ENCODE measurements at regions of chr18 and their contacts with region 1.

Region 1: DNA sequence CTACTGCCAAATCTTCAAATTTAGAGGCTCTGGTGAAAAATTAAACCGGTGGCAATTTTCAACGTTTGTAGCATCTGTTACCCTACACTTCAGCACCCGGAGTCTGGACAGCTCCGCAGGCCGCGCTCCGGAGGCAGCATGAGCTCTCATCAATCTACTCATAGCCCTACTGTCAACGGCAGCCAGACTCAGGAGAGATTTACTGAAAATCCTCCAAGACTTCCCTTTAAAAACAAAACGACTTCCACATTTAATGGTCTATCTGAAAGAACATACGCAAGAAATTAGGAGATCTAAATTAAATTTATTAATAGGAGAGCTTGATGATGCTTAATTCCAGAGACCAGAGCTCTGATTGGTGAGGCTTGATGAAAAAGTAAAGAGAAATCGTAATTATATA is 970 bp upstream of the ADCYAP1 start:
- DNase-seq: peak; percentile 57
- ATAC-seq: no peak
- H3K4me3 ChIP-seq: no peak overlapping the region
- H3K27ac ChIP-seq: no peak overlapping the region
- H3K4me1 ChIP-seq: 0 out of 2 replicates have a peak, but pooled peaks cover 4% of the 10 kb centered on the region
- H3K27me3 ChIP-seq: peaks cover 97% of the 10 kb centered on the region
- CTCF ChIP-seq: no peak

Region 2: GRCh38 chr18:731185-731584 is 172.5 kb before region 1 on chr18:
- CTCF ChIA-PET with region 1: no interaction called
- POLR2A ChIA-PET with region 1: no interaction called
- intact Hi-C with region 1: no loop called
- DNase-seq: no peak
- ATAC-seq: no peak; the same call in 1 of the 2 replicates
- H3K4me3 ChIP-seq: no peak overlapping the region
- H3K27ac ChIP-seq: no peak overlapping the region
- H3K4me1 ChIP-seq: no peaks in the 10 kb centered on the region
- H3K27me3 ChIP-seq: no peaks in the 10 kb centered on the region
- CTCF ChIP-seq: no peak

Region 3: DNA sequence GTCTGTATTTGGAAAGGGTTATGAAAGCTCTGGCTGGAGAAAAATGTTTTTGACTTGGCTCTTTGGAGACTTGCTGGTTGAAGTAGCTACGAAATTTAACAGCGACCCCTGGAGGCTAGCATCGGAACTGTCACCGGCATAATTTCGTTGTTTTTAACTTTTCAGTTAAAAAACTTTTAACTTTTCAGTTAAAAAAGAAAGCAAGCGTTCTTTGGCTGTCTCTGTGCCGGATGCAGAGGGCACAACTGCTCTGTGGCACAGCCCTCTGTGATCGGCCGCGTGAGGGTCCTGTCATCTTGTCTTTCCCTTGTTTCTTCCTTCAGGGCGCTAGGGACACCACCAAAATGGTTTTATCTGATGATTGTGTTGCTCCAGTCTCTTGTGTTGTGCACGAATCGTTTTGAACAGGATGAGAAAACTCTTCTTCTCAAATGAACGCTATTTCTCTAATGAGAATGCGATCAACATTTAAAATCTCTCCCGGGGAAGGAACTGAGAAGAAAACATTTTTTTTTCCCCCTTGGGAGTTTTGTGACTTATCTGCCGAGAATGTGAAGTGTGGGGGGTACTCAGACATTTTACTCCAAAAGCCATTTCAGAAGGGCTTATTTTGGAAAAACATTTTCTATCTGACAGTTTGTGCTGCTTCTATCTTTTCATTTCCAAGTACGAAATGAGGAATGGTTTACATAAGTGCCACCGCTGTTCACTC is 58.1 kb after region 1 on chr18:
- CTCF ChIA-PET with region 1: no interaction called
- POLR2A ChIA-PET with region 1: no interaction called
- intact Hi-C with region 1: loop called (anchors 1 kb)
- DNase-seq: peak; percentile 70
- ATAC-seq: peak; percentile 31; the same call in 1 of the 2 replicates
- H3K4me3 ChIP-seq: peak overlapping the region; percentile 50
- H3K27ac ChIP-seq: no peak overlapping the region
- H3K4me1 ChIP-seq: peaks cover 4% of the 10 kb centered on the region; the same call in 1 of the 2 replicates
- H3K27me3 ChIP-seq: peaks cover 19% of the 10 kb centered on the region
- CTCF ChIP-seq: peak; percentile 93

Region 4: DNA sequence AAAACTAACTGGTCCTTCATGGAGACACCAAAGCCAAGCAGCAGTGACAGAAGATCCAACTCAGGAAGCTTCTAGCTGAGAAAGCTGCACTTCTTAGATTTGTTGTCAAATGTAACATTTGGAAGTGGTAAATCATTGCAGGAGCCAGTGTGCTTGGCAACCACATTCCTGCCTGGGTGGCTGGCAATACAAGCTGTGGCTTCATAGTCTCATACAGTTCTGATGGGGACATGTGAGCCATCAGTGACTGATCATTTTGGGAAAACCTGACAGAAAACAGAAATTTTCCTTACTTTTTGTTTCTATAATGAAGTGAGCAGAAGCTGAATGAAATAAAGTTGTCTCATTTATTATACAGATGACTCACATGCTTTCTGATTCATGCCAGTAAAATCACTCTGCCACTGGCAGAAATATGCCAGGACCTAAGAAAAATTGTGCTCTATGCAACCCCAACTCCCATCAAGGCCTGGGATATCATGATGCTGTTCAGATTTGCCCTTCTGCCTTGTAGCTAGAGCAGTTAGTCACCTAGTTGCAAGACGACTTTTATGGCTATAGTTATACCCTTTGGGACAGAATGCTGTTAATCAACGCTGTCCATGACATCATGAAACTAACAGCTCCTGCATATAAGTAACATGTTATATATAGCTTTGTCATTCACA is 509.1 kb after region 1 on chr18:
- CTCF ChIA-PET with region 1: no interaction called
- POLR2A ChIA-PET with region 1: no interaction called
- intact Hi-C with region 1: loop called (anchors 10 kb)
- DNase-seq: peak; percentile 76
- ATAC-seq: peak; percentile 96
- H3K4me3 ChIP-seq: no peak overlapping the region
- H3K27ac ChIP-seq: peak overlapping the region; percentile 71
- H3K4me1 ChIP-seq: peaks cover 22% of the 10 kb centered on the region
- H3K27me3 ChIP-seq: no peaks in the 10 kb centered on the region
- CTCF ChIP-seq: no peak

Region 5: GRCh38 chr18:1513519-1513918 is 609.8 kb after region 1 on chr18:
- CTCF ChIA-PET with region 1: no interaction called
- POLR2A ChIA-PET with region 1: interaction called, 3 read pairs
- intact Hi-C with region 1: loop called (anchors 5 kb)
- DNase-seq: peak; percentile 58
- ATAC-seq: peak; percentile 49; the same call in 1 of the 2 replicates
- H3K4me3 ChIP-seq: no peak overlapping the region
- H3K27ac ChIP-seq: no peak overlapping the region
- H3K4me1 ChIP-seq: peaks cover 3% of the 10 kb centered on the region; the same call in 1 of the 2 replicates
- H3K27me3 ChIP-seq: no peaks in the 10 kb centered on the region
- CTCF ChIP-seq: peak; percentile 67

Measured in PC-3 (cell line).